ENCODE measurements at regions of chr10 and their contacts with region 1.

Region 1: GRCh38 chr10:7243873-7244272 is 167.0 kb downstream of the SFMBT2 start:
- DNase-seq: peak; percentile 25 to 30
- ATAC-seq: peak; percentile 58 to 81 (median 60)
- H3K4me3 ChIP-seq: no peak overlapping the region
- H3K4me3 Mint-ChIP-seq: peak overlapping the region; percentile 92
- H3K27ac ChIP-seq: peak overlapping the region; percentile 71
- H3K27ac Mint-ChIP-seq: peak overlapping the region; percentile 90 to 99
- H3K4me1 ChIP-seq: peaks cover 30% of the 10 kb centered on the region
- H3K4me1 Mint-ChIP-seq: peaks cover 62 to 66% of the 10 kb centered on the region in 2 donors
- H3K27me3 ChIP-seq: no peaks in the 10 kb centered on the region
- H3K27me3 Mint-ChIP-seq: no peaks in the 10 kb centered on the region
- CTCF ChIP-seq: no peak

Region 2: GRCh38 chr10:6498771-6499170 is 745.1 kb before region 1 on chr10:
- intact Hi-C with region 1: loop called (anchors 5 kb)
- DNase-seq: peak in 1 of 2 donors; percentile 83
- ATAC-seq: peak; percentile 74 to 86 (median 86)
- H3K4me3 ChIP-seq: no peak overlapping the region
- H3K4me3 Mint-ChIP-seq: peak overlapping the region; percentile 75
- H3K27ac ChIP-seq: peak overlapping the region; percentile 66
- H3K27ac Mint-ChIP-seq: no peak overlapping the region
- H3K4me1 ChIP-seq: peaks cover 40% of the 10 kb centered on the region
- H3K4me1 Mint-ChIP-seq: peaks cover 47 to 52% of the 10 kb centered on the region in 2 donors
- H3K27me3 ChIP-seq: no peaks in the 10 kb centered on the region
- H3K27me3 Mint-ChIP-seq: no peaks in the 10 kb centered on the region
- CTCF ChIP-seq: no peak

Region 3: GRCh38 chr10:7027913-7028808 is 215.7 kb before region 1 on chr10:
- intact Hi-C with region 1: loop called (anchors 5 kb)
- DNase-seq: peak in 1 of 2 donors; percentile 32
- ATAC-seq: peak in 2 of 3 donors; percentile 15 to 48
- H3K4me3 ChIP-seq: no peak overlapping the region
- H3K4me3 Mint-ChIP-seq: peak overlapping the region; percentile 90
- H3K27ac ChIP-seq: peak overlapping the region; percentile 93
- H3K27ac Mint-ChIP-seq: peak overlapping the region; percentile 93
- H3K4me1 ChIP-seq: peaks cover 50% of the 10 kb centered on the region
- H3K4me1 Mint-ChIP-seq: peaks cover 75 to 80% of the 10 kb centered on the region in 2 donors
- H3K27me3 ChIP-seq: no peaks in the 10 kb centered on the region
- H3K27me3 Mint-ChIP-seq: no peaks in the 10 kb centered on the region
- CTCF ChIP-seq: no peak

Region 4: GRCh38 chr10:7054900-7055299 is 189.0 kb before region 1 on chr10:
- intact Hi-C with region 1: no loop called
- DNase-seq: peak in 1 of 2 donors; percentile 9
- ATAC-seq: no peak
- H3K4me3 ChIP-seq: no peak overlapping the region
- H3K4me3 Mint-ChIP-seq: no peak overlapping the region
- H3K27ac ChIP-seq: no peak overlapping the region
- H3K27ac Mint-ChIP-seq: no peak overlapping the region
- H3K4me1 ChIP-seq: no peaks in the 10 kb centered on the region
- H3K4me1 Mint-ChIP-seq: peaks cover 30 to 37% of the 10 kb centered on the region in 2 donors
- H3K27me3 ChIP-seq: no peaks in the 10 kb centered on the region
- H3K27me3 Mint-ChIP-seq: no peaks in the 10 kb centered on the region
- CTCF ChIP-seq: no peak

Region 5: DNA sequence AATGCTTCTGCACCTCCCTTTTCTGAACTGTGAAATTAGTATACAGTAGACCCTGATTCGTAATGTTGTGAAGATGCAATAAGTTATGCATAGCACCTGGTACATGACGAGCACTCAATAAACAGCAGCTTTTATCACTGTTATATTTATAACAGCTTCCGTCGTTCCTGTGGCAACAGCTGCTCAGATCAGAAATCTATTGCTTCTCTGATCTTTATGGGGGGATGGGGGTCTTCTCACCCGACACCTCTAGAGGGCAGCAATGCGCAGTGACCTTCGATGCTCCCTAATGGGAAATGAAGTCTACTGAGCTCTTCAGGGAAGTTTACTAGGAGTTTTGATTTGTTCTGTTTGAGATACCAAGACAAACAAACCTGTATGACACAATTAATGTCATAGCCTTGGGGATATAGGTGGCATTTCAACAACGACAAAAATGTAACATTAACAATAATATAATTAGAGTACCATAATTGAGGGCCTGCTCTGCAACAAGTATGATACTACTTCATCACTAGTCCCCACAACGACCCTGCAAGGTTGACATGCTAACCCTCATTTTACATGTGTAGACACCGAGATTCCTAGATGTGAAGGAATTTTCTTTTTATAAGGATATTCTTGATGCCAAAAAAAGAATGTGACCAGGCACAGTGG is 122.6 kb before region 1 on chr10:
- intact Hi-C with region 1: loop called (anchors 10 kb)
- DNase-seq: peak; percentile 63 to 88
- ATAC-seq: peak; percentile 89 to 96 (median 91)
- H3K4me3 ChIP-seq: no peak overlapping the region
- H3K4me3 Mint-ChIP-seq: peak overlapping the region; percentile 18
- H3K27ac ChIP-seq: no peak overlapping the region
- H3K27ac Mint-ChIP-seq: peak overlapping the region; percentile 66 to 71
- H3K4me1 ChIP-seq: peaks cover 8% of the 10 kb centered on the region
- H3K4me1 Mint-ChIP-seq: peaks cover 7 to 8% of the 10 kb centered on the region in 2 donors
- H3K27me3 ChIP-seq: no peaks in the 10 kb centered on the region
- H3K27me3 Mint-ChIP-seq: no peaks in the 10 kb centered on the region
- CTCF ChIP-seq: peak; percentile 68

Region 6: DNA sequence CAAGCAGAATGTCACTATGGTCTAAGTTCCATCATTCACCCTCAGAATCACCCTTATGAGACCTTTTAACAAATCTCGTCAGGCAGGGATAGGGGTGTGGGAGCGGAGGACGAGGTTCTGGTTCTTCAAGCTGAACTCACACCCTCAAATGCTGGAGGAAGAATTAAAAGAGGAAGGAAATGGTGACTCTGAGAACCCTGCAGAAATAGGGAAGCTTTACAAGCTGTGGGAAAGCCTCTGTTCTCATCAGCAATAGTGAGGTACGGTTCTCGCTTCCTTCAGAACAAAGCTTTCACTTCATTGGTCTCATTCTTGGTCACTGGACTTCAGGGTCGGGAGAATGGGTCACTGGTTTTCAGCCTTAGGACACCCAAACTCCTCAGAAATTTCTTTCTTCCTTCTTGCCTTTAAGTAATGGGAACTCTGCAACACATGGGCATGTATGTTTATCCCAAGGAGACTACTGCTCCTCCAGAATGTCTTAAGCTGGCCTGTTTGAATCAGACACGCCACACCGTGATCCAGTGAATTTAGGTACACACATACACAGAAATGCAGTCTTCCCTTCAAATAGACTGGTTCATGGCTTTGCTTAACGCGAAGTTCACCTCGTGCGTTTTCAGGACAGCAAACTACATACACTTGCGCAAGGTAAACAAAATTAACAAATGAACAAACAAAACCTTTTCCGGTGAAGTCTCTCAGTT is 59.1 kb before region 1 on chr10:
- intact Hi-C with region 1: no loop called
- DNase-seq: peak in 1 of 2 donors; percentile 13
- ATAC-seq: peak; percentile 33 to 85 (median 45)
- H3K4me3 ChIP-seq: no peak overlapping the region
- H3K4me3 Mint-ChIP-seq: no peak overlapping the region
- H3K27ac ChIP-seq: peak overlapping the region; percentile 70
- H3K27ac Mint-ChIP-seq: peak overlapping the region; percentile 60 to 70
- H3K4me1 ChIP-seq: peaks cover 10% of the 10 kb centered on the region
- H3K4me1 Mint-ChIP-seq: peaks cover 36 to 41% of the 10 kb centered on the region in 2 donors
- H3K27me3 ChIP-seq: no peaks in the 10 kb centered on the region
- H3K27me3 Mint-ChIP-seq: no peaks in the 10 kb centered on the region
- CTCF ChIP-seq: no peak

Region 7: DNA sequence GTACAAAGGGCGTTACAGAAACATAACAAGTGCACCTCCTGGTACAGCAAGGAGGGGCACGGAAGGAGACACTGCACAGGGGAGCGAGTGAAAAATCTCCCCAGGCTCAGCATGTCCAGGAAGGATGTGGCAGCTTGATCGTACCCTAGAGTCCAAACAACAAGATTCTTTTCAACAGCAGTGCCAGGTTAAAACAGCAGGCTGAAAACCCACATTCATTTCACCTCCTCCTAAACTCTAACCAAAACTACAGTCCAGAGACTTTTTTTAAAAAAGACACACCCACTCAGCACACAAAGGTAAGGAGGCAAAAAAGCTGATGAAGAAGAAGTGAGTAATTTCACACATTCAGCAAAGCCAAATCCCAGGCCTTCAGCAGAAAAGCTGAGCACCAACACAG is 28.1 kb after region 1 on chr10:
- intact Hi-C with region 1: loop called (anchors 1 kb)
- DNase-seq: peak in 1 of 2 donors; percentile 60
- ATAC-seq: peak in 2 of 3 donors; percentile 17 to 47
- H3K4me3 ChIP-seq: no peak overlapping the region
- H3K4me3 Mint-ChIP-seq: peak overlapping the region; percentile 79
- H3K27ac ChIP-seq: peak overlapping the region; percentile 8
- H3K27ac Mint-ChIP-seq: peak overlapping the region; percentile 83 to 89
- H3K4me1 ChIP-seq: peaks cover 37% of the 10 kb centered on the region
- H3K4me1 Mint-ChIP-seq: peaks cover 60 to 79% of the 10 kb centered on the region in 2 donors
- H3K27me3 ChIP-seq: no peaks in the 10 kb centered on the region
- H3K27me3 Mint-ChIP-seq: no peaks in the 10 kb centered on the region
- CTCF ChIP-seq: no peak

Region 8: DNA sequence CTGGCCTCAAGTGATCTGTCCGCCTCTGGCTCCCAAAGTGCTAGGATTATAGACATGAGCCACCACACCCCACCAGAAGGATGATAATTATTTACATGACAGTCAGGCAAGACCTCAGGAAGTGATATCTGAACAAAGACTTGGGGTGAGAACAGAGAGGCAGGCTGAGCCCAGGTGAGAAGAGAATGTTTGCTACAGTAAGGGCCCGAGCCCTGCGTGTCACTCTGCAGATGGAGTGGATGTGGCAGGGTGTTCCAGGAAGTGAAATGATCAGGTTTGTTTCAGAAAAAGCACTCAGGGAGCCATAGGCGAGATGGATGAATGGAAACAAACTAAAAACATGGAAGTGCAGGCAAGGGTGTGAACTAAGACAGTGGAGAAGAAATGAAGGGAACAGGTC is 144.7 kb after region 1 on chr10:
- intact Hi-C with region 1: no loop called
- DNase-seq: peak in 1 of 2 donors; percentile 54
- ATAC-seq: peak; percentile 73 to 86 (median 76)
- H3K4me3 ChIP-seq: no peak overlapping the region
- H3K4me3 Mint-ChIP-seq: peak overlapping the region; percentile 67
- H3K27ac ChIP-seq: peak overlapping the region; percentile 50
- H3K27ac Mint-ChIP-seq: peak overlapping the region; percentile 78 to 87
- H3K4me1 ChIP-seq: peaks cover 14% of the 10 kb centered on the region
- H3K4me1 Mint-ChIP-seq: peaks cover 66 to 74% of the 10 kb centered on the region in 2 donors
- H3K27me3 ChIP-seq: no peaks in the 10 kb centered on the region
- H3K27me3 Mint-ChIP-seq: no peaks in the 10 kb centered on the region
- CTCF ChIP-seq: no peak

Measured in natural killer cell (primary cell).